Activated T-helper 1 cell treated with anti-CD3 and anti-CD28 coated beads, Interleukin-12 subunit alpha, Interleukin-12 subunit beta, Interleukin-2, Interleukin-4 antibody, amounts not matched to agents 30 ng/mL and 10 ng/mL and 1 ng/mL, durations not matched to agents 14 hours and 24 hours and 36 hours (primary cell): ENCODE measurements at regions of chr5 and their contacts with region 1.

Region 1: DNA sequence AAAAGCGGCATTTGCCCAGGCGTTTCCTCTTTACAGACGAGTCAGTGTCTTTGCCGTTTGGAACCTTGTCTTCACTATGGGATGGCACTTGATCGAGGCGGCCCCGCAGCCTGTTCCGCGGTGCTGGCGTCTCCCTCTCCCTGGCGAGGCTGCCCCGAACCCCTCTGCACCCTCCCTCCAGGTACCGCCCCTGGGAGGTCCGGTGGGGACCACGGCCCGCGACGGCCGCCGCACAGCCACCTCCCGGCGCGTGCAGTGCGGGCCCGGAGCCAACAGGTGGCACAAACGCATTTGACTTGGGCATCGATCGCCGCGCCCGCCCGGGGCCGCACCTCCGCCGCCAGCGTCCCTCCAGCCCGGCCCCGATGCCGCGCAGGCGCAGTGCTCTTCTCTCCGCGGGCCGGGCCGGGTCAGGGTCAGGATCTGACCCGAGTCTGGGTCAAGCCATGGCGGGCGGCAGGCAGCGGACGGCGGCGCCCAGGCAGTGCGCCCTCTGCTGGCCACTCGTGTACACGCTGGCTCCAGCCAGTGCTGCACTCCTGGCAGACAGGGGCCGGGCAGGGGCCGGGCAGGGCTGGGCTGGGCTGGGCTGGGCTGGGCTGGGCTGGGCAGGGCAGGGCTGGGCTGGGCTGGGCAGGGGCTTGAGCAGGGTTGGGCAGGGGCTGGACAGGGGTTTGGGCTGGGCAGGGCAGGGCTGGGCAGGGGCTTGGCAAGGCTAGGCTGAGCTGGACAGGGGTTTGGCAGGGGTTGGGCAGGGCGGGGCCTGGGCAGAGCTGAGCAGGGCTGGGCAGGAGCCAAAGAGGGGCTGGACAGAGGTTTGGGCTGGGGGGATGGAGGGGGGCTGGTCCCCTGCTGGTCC is 155.8 kb upstream of the IRX4 start:
- DNase-seq: peak; percentile 47
- H3K4me3 Mint-ChIP-seq: peak overlapping the region; percentile 64
- H3K27ac Mint-ChIP-seq: no peak overlapping the region
- H3K4me1 Mint-ChIP-seq: no peaks in the 10 kb centered on the region
- H3K27me3 Mint-ChIP-seq: peaks cover 13% of the 10 kb centered on the region

Region 2: GRCh38 chr5:1666812-1667588 is 371.6 kb before region 1 on chr5:
- intact Hi-C with region 1: loop called (anchors 2 kb)
- DNase-seq: no peak
- H3K4me3 Mint-ChIP-seq: no peak overlapping the region
- H3K27ac Mint-ChIP-seq: no peak overlapping the region
- H3K4me1 Mint-ChIP-seq: no peaks in the 10 kb centered on the region
- H3K27me3 Mint-ChIP-seq: peaks cover 52% of the 10 kb centered on the region

Region 3: DNA sequence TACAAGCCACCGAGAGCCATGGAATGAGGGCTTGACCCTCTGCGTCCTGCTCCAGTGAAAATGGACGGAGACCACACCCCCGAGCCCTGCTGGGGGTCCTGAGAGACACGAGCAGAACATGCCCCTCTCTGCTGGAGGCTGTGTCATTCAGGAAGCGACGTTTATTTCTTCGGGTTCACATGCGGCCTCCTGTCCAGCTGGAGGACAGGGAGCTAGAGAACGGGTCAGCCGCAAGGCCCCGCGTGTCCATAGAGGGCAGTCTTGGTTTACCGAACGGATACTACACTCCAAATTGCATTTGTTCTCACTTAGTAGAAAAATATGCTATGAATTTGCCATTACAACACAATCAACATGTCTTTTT is 275.0 kb before region 1 on chr5:
- intact Hi-C with region 1: loop called (anchors 1 kb)
- DNase-seq: peak; percentile 19
- H3K4me3 Mint-ChIP-seq: no peak overlapping the region
- H3K27ac Mint-ChIP-seq: no peak overlapping the region
- H3K4me1 Mint-ChIP-seq: no peaks in the 10 kb centered on the region
- H3K27me3 Mint-ChIP-seq: peaks cover 4% of the 10 kb centered on the region

Region 4: GRCh38 chr5:1827886-1828397 is 210.6 kb before region 1 on chr5:
- intact Hi-C with region 1: no loop called
- DNase-seq: no peak
- H3K4me3 Mint-ChIP-seq: no peak overlapping the region
- H3K27ac Mint-ChIP-seq: no peak overlapping the region
- H3K4me1 Mint-ChIP-seq: no peaks in the 10 kb centered on the region
- H3K27me3 Mint-ChIP-seq: no peaks in the 10 kb centered on the region

Region 5: GRCh38 chr5:1946776-1947175 is 91.8 kb before region 1 on chr5:
- intact Hi-C with region 1: no loop called
- DNase-seq: no peak
- H3K4me3 Mint-ChIP-seq: no peak overlapping the region
- H3K27ac Mint-ChIP-seq: no peak overlapping the region
- H3K4me1 Mint-ChIP-seq: no peaks in the 10 kb centered on the region
- H3K27me3 Mint-ChIP-seq: peaks cover 15% of the 10 kb centered on the region

Region 6: DNA sequence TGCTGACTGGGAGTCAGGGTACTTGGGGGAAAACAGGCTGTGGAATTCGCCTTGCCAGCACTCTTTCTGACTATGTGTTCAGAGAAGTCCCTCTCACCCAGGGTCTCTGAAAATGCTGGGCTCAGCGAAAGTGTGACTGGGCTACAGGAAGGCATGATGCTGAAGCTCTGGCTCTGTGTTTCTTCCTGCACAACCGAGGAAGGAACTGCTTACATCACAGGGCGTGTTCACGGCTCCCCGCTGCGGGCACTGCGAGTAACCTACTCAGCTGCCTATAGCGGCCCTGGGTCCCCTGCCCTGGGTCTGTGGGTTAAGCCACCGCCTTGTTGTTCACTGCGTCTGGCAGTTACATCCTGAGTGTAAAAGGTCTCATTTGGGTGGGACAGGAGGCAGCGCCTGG is 66.6 kb after region 1 on chr5:
- intact Hi-C with region 1: no loop called
- DNase-seq: no peak
- H3K4me3 Mint-ChIP-seq: no peak overlapping the region
- H3K27ac Mint-ChIP-seq: no peak overlapping the region
- H3K4me1 Mint-ChIP-seq: no peaks in the 10 kb centered on the region
- H3K27me3 Mint-ChIP-seq: no peaks in the 10 kb centered on the region

Region 7: GRCh38 chr5:2149196-2149541 is 110.6 kb after region 1 on chr5:
- intact Hi-C with region 1: loop called (anchors 1 kb)
- DNase-seq: peak; percentile 6
- H3K4me3 Mint-ChIP-seq: no peak overlapping the region
- H3K27ac Mint-ChIP-seq: no peak overlapping the region
- H3K4me1 Mint-ChIP-seq: peaks cover 9% of the 10 kb centered on the region
- H3K27me3 Mint-ChIP-seq: no peaks in the 10 kb centered on the region